PC-9 (cell line): ENCODE measurements at regions of chr13 and their contacts with region 1.

Region 1: GRCh38 chr13:49774376-49775005 is 18.0 kb downstream of the KPNA3 start:
- DNase-seq: no peak
- H3K4me3 ChIP-seq: no peak overlapping the region
- H3K27ac ChIP-seq: 0 out of 2 replicates have a peak overlapping the region, but pooled peaks have one; percentile 47
- H3K4me1 ChIP-seq: peaks cover 25% of the 10 kb centered on the region
- H3K27me3 ChIP-seq: no peaks in the 10 kb centered on the region
- CTCF ChIP-seq: no peak

Region 2: DNA sequence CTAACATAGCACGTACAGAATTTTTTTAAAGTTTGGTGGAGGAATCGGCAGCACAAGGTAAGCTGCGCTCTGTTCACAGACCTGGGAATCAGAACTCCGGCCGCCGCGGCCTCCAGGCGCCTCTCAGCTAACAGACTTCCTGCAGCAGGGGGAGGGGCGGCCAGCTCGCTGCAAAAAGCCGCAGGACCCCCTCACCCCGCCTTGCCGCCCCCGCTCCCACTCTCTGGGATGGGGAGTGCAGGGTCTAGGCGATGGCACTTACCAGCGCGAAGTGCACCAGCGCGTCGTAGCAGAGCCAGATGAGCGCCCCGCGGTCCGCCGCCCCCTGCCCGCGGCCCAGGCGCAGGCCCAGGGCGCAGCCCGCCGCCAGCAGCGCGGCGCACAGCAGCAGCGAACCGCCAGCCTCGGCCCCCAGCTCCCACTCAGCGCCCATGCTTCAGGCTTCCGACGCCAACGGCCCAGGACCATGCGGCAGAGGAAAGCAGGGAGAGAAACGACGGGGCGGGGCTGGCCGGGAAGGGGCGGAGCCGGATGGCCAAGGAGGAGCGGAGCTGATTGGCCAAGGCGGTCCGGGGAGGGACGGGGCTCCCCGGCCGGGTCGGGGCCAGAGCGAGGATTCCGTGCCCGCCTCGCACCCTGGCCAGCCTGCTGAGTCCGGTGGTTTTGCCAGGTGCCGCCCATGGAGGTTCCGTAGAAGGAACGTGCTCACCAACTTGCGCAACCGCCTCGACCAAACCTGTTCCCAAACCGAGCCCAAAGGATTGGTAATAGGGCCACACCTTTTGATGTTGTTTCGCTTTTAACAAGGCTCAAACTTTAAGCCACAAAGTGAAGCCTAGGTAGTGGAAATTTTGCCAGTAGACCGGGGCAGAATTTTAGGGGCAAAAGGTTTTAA is 83.3 kb before region 1 on chr13 and contains the start of gene EBPL:
- CTCF ChIA-PET with region 1: no interaction called
- POLR2A ChIA-PET with region 1: interaction called, 28 read pairs
- intact Hi-C with region 1: no loop called
- DNase-seq: peak; percentile 92 to 96
- H3K4me3 ChIP-seq: peak within 1 kb of the TSS; percentile 71
- H3K27ac ChIP-seq: peak within 1 kb of the TSS; percentile 91
- H3K4me1 ChIP-seq: peaks cover 33% of the 10 kb centered on the region
- H3K27me3 ChIP-seq: no peaks in the 10 kb centered on the region
- CTCF ChIP-seq: no peak
- total RNA-seq, gene EBPL: 77.0 and 100 TPM in 2 replicates

Region 3: GRCh38 chr13:49739498-49740187 is 34.8 kb before region 1 on chr13:
- CTCF ChIA-PET with region 1: no interaction called
- POLR2A ChIA-PET with region 1: interaction called, 21 read pairs
- intact Hi-C with region 1: no loop called
- DNase-seq: no peak
- H3K4me3 ChIP-seq: no peak overlapping the region
- H3K27ac ChIP-seq: no peak overlapping the region
- H3K4me1 ChIP-seq: peaks cover 7% of the 10 kb centered on the region; the same call in 1 of the 2 replicates
- H3K27me3 ChIP-seq: no peaks in the 10 kb centered on the region
- CTCF ChIP-seq: no peak